ENCODE measurements at regions of chr2 and their contacts with region 1.

Region 1: DNA sequence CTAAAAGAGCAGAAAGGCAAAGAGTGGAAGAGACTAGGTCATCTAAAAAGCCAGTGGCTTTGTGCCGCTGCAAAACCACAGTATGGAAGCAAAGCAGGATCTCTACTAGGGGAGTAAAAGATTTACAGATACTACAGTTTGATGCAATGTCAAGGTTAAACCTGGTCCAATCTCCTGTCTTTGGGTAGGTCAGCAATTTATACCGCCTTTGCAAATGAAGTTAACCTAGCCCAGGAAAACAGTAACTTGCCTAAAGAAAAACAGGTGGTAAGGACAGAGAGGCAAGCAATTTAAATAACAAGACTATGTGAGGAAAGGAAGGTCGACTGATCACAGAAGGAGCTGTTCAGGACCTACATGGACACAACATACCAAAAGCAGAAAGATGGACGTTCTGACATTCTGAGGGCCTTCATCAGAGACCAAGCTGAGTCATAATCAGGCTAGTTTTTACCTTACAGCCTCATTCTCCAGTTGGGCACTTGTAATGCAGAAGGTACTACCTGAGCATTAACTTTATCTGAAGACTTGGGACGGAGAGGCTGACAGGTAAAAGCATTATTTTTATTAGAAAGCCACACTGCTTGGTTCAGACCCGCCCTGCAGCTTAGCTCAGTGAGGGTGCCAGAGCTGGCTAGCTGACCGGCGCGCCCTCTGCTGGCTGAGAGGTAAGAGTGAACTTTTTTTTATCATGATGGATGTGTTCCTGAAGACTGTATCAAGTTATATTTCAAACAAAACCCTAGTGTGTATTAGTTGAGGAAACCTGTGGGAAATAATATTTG is 15.9 kb downstream of the CDKL4 start:
- DNase-seq: peak; percentile 92
- ATAC-seq: peak; percentile 82
- H3K4me3 Mint-ChIP-seq: peak overlapping the region; percentile 61
- H3K27ac Mint-ChIP-seq: peak overlapping the region; percentile 97
- H3K4me1 Mint-ChIP-seq: peaks cover 57% of the 10 kb centered on the region
- H3K27me3 Mint-ChIP-seq: no peaks in the 10 kb centered on the region

Region 2: DNA sequence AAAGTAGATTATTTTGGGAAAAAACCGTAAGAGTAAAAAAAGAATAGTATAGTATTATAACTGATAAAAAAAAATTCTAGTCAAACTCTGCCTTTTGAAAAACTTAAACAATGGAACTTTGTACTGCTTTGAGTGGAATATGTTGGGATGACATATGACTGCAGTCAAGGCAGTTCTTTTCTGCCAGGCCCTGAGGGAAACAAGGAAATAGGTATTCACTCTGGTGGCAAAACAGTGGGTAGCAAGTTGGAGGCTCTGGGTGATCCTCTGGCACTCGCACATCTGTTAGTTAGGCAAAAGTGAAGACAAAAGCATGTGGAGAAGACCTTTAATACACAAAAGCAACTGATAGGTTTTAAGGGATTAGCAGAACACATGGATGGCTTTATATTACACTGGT is 235.9 kb before region 1 on chr2:
- CTCF ChIA-PET with region 1: interaction called, 10 read pairs
- POLR2A ChIA-PET with region 1: no interaction called
- DNase-seq: no peak
- ATAC-seq: no peak
- H3K4me3 Mint-ChIP-seq: no peak overlapping the region
- H3K27ac Mint-ChIP-seq: peak overlapping the region; percentile 58
- H3K4me1 Mint-ChIP-seq: peaks cover 10% of the 10 kb centered on the region
- H3K27me3 Mint-ChIP-seq: no peaks in the 10 kb centered on the region

Region 3: DNA sequence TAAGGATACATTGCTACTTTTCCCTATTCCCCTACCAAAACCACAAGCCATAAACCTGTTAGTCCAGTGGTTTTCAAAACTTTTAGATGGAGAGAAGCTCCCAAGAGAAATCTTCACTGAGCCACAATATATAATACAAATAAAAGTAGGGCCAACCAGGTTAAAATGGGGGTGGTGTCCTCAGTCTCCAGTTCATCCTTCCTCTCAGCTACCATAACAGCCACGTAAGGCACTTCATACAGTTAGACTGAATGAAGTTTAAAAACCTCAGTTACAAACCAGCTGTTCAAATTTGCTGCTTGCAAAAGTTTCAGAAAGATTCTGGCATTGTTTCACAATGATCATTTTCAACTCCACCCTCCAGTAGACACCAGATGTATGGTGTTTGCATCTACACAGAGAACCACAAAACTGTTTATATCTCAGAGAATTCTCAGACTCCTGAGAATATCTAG is 132.9 kb before region 1 on chr2:
- CTCF ChIA-PET with region 1: interaction called, 42 read pairs
- POLR2A ChIA-PET with region 1: interaction called, 3 read pairs
- DNase-seq: no peak
- ATAC-seq: peak; percentile 37
- H3K4me3 Mint-ChIP-seq: no peak overlapping the region
- H3K27ac Mint-ChIP-seq: peak overlapping the region; percentile 36
- H3K4me1 Mint-ChIP-seq: peaks cover 66% of the 10 kb centered on the region
- H3K27me3 Mint-ChIP-seq: no peaks in the 10 kb centered on the region

Region 4: DNA sequence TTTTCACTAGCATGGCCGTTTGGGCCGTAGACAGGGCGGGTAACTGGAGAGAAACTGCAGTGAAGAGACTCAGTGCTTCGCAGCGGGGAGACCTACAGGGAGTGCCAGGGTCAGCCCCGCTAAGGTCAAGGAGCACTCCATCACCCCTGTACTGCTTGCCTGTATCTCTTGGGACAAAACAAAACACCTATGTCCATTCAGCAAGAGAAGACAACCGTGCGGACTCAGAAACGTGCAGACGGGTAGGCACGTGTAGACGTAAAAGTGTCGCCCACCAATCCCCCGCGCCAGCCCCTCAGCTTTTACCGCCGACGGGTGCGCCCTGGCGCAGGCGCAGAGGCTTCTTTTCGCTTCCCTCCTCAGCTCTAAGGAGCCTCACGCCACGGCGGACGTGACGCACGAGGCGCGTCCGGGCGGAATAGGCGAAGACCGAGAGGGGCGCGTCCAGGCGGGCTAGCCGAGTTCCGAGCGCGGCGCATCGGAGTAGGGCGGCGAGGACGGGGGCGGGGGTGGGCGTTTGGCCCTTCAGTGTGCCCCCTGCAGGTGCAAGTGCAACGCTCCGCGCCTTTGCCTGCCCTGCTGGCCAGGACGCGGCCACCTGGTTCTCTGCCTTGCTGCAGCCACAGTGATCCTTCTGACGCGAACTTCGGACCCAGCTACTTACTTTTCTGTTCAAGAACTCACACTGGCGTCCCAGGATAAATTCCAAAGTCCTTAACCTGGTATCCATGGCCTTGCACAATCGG is 103.6 kb before region 1 on chr2:
- CTCF ChIA-PET with region 1: interaction called, 213 read pairs
- POLR2A ChIA-PET with region 1: interaction called, 315 read pairs
- DNase-seq: peak; percentile 98
- ATAC-seq: peak; percentile 72
- H3K4me3 Mint-ChIP-seq: peak overlapping the region; percentile 85
- H3K27ac Mint-ChIP-seq: peak overlapping the region; percentile 94
- H3K4me1 Mint-ChIP-seq: peaks cover 68% of the 10 kb centered on the region
- H3K27me3 Mint-ChIP-seq: no peaks in the 10 kb centered on the region

Region 5: GRCh38 chr2:39243476-39244123 is 15.8 kb after region 1 on chr2 and contains the start of gene CDKL4:
- CTCF ChIA-PET with region 1: interaction called, 12 read pairs
- POLR2A ChIA-PET with region 1: no interaction called
- DNase-seq: no peak
- ATAC-seq: peak; percentile 62
- H3K4me3 Mint-ChIP-seq: peak within 1 kb of the TSS; percentile 76
- H3K27ac Mint-ChIP-seq: peak within 1 kb of the TSS; percentile 81
- H3K4me1 Mint-ChIP-seq: peaks cover 22% of the 10 kb centered on the region
- H3K27me3 Mint-ChIP-seq: no peaks in the 10 kb centered on the region
- total RNA-seq, gene CDKL4: 1.1 TPM

Region 6: GRCh38 chr2:39338502-39338901 is 110.7 kb after region 1 on chr2:
- CTCF ChIA-PET with region 1: no interaction called
- POLR2A ChIA-PET with region 1: no interaction called
- DNase-seq: no peak
- ATAC-seq: no peak
- H3K4me3 Mint-ChIP-seq: no peak overlapping the region
- H3K27ac Mint-ChIP-seq: no peak overlapping the region
- H3K4me1 Mint-ChIP-seq: no peaks in the 10 kb centered on the region
- H3K27me3 Mint-ChIP-seq: no peaks in the 10 kb centered on the region

Measured in activated CD8-positive, alpha-beta T cell treated with anti-CD3 and anti-CD28 coated beads, Interleukin-2, amount 10 ng/mL, durations not matched to agents 7 days and 5 days (primary cell).